ENCODE measurements at regions of chr17 and their contacts with region 1.

Region 1: DNA sequence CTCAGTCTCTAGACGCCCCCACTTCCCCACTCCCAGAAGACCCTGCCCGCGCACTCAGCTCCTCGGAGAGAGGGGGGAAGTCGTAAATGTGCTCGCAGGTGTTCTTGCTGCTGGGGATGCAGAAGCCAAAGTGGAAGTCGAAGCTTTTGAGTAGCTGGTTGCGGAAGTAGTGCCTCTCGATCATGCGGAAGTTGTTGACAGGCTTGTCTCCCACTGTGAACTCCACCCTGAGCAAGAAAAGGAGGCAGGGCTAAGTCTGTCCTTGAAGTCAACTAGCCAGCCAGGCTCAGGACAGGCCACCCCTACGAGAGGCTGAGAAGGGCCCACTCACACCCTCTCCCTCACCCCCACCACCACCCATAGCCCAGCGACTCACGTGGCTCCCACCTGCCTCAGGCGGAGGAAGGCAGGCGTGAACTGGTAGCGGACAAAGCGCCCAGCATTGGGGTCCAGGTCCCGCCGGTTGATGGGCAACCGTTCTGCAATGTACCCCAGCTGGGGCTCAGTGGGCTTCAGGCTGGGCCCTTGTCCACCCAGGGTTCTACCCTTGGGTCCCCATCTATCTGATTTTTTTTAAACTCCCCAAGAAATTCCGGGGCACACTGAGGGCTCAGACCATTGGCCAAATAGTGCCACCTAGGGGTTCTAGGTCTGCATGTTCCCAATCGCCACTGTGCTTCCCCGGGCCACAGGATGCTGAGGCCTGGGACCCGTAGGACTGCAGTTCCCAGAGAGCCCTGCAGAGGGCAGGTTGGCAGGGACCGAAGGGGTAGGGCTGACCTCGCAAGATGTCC is 4.6 kb downstream of the UNC119 start:
- DNase-seq: peak; percentile 87
- H3K4me3 ChIP-seq: no peak overlapping the region
- H3K27ac ChIP-seq: peak overlapping the region in 3 of 4 donors; percentile 6 to 47 (median 27)
- H3K4me1 ChIP-seq: peaks cover 4 to 35% (median 8%) of the 10 kb centered on the region in 4 donors
- H3K27me3 ChIP-seq: no peaks in the 10 kb centered on the region
- CTCF ChIP-seq: peak; percentile 88 to 93 (median 92)
- EP300 ChIP-seq: no peak
- POLR2A ChIP-seq: no peak

Region 2: GRCh38 chr17:28599311-28600184 is 51.7 kb after region 1 on chr17:
- in situ Hi-C with region 1: no loop called
- intact Hi-C with region 1: loop called (anchors 10 kb)
- DNase-seq: peak; percentile 76
- H3K4me3 ChIP-seq: peak overlapping the region; percentile 43 to 63 (median 52)
- H3K27ac ChIP-seq: peak overlapping the region; percentile 95 to 96 (median 96)
- H3K4me1 ChIP-seq: peaks cover 0 to 20% (median 18%) of the 10 kb centered on the region in 4 donors
- H3K27me3 ChIP-seq: no peaks in the 10 kb centered on the region
- CTCF ChIP-seq: no peak
- EP300 ChIP-seq: no peak
- POLR2A ChIP-seq: peak; percentile 63